Activated CD4-positive, alpha-beta T cell treated with anti-CD3 and anti-CD28 coated beads for 36 hours (primary cell): ENCODE measurements at regions of chr12 and their contacts with region 1.

Region 1: DNA sequence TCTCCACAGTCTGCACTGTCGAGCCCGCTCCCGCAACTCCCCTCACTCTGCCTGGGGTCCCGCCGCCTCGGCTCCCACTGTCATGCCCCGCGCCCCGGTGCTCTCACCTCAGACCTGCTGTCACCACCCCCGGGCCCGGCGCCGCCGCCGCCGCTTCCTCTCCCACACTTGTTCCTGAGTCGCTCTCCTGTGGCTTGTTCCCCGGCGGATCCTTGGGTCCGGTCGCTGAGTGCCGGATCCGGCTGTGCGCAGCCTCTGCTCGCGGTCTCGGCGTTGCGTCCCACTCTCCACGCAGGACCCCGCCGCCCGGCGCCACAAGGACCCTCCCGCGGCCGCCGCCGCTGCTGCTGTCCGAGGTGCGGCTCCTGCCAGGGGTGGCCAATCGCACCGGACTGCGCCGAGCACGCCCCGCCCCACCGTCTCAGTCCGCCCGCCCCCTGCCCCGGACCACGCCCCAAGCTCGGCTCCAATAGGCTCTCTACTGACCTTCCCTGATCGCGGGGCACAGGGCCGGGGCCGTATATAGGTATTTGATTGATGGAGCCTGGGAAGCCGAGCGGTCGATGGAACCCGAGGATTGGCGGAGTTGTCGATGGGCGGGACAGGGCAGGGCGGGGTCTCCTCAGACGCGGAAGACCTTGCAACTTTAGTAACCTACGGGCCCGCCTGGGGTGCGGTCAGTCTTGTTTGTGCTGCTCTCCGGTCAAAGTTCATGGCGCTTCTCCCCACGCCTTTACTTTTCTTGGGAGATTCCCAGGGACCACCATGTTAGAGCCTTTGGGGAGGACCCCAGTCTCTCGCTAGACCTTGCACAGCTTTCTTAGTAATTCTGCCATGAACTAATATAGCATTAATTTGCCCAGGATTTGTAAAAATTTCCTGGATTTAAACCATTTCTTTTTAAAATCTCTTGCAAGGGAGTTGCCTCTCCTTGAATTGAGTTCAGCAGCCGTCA is at the start of gene TAOK3:
- DNase-seq: peak; percentile 99
- ATAC-seq: peak; percentile 91
- H3K4me3 Mint-ChIP-seq: peak within 1 kb of the TSS; percentile 91
- H3K27ac Mint-ChIP-seq: peak within 1 kb of the TSS; percentile 93
- H3K4me1 Mint-ChIP-seq: peaks cover 39% of the 10 kb centered on the region
- H3K27me3 Mint-ChIP-seq: no peaks in the 10 kb centered on the region
- total RNA-seq, gene TAOK3: 49.4 to 51.1 TPM

Region 2: GRCh38 chr12:116737774-116738700 is 1634.8 kb before region 1 on chr12 and contains the starts of genes RNFT2 and SPRING1:
- CTCF ChIA-PET with region 1: no interaction called
- POLR2A ChIA-PET with region 1: no interaction called
- intact Hi-C with region 1: loop called in 1 of 2 experiments (anchors 2 kb)
- DNase-seq: peak; percentile 99
- ATAC-seq: peak; percentile 99
- H3K4me3 Mint-ChIP-seq: peak within 1 kb of the TSS; percentile 85
- H3K27ac Mint-ChIP-seq: peak within 1 kb of the TSS; percentile 61
- H3K4me1 Mint-ChIP-seq: peaks cover 22% of the 10 kb centered on the region
- H3K27me3 Mint-ChIP-seq: no peaks in the 10 kb centered on the region
- total RNA-seq, gene RNFT2: 14.7 to 15.0 TPM
- total RNA-seq, gene SPRING1: 15.3 to 17.4 TPM

Region 3: GRCh38 chr12:117874842-117875434 is 497.9 kb before region 1 on chr12:
- CTCF ChIA-PET with region 1: interaction called, 11 read pairs
- POLR2A ChIA-PET with region 1: no interaction called
- intact Hi-C with region 1: loop called in 1 of 2 experiments (anchors 2 kb)
- DNase-seq: peak; percentile 84
- ATAC-seq: peak; percentile 70
- H3K4me3 Mint-ChIP-seq: no peak overlapping the region
- H3K27ac Mint-ChIP-seq: no peak overlapping the region
- H3K4me1 Mint-ChIP-seq: peaks cover 12% of the 10 kb centered on the region
- H3K27me3 Mint-ChIP-seq: peaks cover 11% of the 10 kb centered on the region

Region 4: GRCh38 chr12:118061011-118061875 is 311.6 kb before region 1 on chr12 and contains the start of gene WSB2:
- CTCF ChIA-PET with region 1: interaction called, 4 read pairs
- POLR2A ChIA-PET with region 1: no interaction called
- intact Hi-C with region 1: loop called (anchors 2 to 10 kb)
- DNase-seq: peak; percentile 73
- ATAC-seq: peak; percentile 8
- H3K4me3 Mint-ChIP-seq: peak within 1 kb of the TSS; percentile 88
- H3K27ac Mint-ChIP-seq: peak within 1 kb of the TSS; percentile 97
- H3K4me1 Mint-ChIP-seq: peaks cover 47% of the 10 kb centered on the region
- H3K27me3 Mint-ChIP-seq: peaks cover 2% of the 10 kb centered on the region
- total RNA-seq, gene WSB2: 57.7 to 58.2 TPM

Region 5: GRCh38 chr12:118164798-118165486 is 207.9 kb before region 1 on chr12:
- CTCF ChIA-PET with region 1: interaction called, 33 read pairs
- POLR2A ChIA-PET with region 1: no interaction called
- intact Hi-C with region 1: loop called (anchors 1 to 5 kb)
- DNase-seq: peak; percentile 49
- ATAC-seq: no peak
- H3K4me3 Mint-ChIP-seq: no peak overlapping the region
- H3K27ac Mint-ChIP-seq: no peak overlapping the region
- H3K4me1 Mint-ChIP-seq: peaks cover 37% of the 10 kb centered on the region
- H3K27me3 Mint-ChIP-seq: no peaks in the 10 kb centered on the region

Region 6: GRCh38 chr12:118319627-118320026 is 53.2 kb before region 1 on chr12:
- CTCF ChIA-PET with region 1: no interaction called
- POLR2A ChIA-PET with region 1: no interaction called
- intact Hi-C with region 1: no loop called
- DNase-seq: no peak
- ATAC-seq: no peak
- H3K4me3 Mint-ChIP-seq: no peak overlapping the region
- H3K27ac Mint-ChIP-seq: no peak overlapping the region
- H3K4me1 Mint-ChIP-seq: peaks cover 11% of the 10 kb centered on the region
- H3K27me3 Mint-ChIP-seq: no peaks in the 10 kb centered on the region

Region 7: DNA sequence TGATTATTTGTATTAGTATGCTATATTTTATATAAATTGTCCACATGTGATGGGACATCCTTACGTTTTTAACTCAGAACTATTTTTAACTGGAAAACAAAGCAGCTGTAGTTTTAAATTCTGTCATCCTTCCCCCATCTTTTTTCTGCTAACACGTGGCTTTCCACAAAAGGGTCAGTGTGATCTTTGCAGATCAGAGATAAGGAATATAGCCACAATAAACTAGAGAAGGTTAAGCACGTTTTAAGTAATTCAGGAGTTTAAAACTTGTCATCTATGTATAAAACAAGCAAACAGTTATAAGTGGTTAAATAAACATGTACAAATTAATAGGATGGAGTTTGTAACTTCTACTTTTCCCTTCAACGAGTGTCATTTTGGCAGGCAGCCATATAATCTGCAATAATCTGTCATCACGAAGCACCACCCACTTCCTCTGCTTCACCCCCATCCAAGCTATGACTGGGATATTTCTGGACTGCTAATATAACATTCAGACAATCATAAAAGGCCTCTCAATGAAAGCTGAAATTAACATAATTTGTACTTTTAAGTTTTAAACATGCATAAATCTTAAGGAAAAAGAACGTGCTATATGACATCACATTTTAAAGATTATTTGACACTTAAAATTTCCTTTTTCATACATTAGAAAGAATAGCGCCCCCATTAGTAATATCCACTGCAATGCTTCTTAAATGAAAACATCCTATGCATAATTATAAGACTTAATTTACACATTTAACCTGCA is 15.4 kb before region 1 on chr12:
- CTCF ChIA-PET with region 1: interaction called, 102 read pairs
- POLR2A ChIA-PET with region 1: interaction called, 6 read pairs
- intact Hi-C with region 1: loop called (anchors 1 kb)
- DNase-seq: peak; percentile 72
- ATAC-seq: peak; percentile 74
- H3K4me3 Mint-ChIP-seq: peak overlapping the region; percentile 83
- H3K27ac Mint-ChIP-seq: peak overlapping the region; percentile 95
- H3K4me1 Mint-ChIP-seq: peaks cover 49% of the 10 kb centered on the region
- H3K27me3 Mint-ChIP-seq: no peaks in the 10 kb centered on the region

Region 8: DNA sequence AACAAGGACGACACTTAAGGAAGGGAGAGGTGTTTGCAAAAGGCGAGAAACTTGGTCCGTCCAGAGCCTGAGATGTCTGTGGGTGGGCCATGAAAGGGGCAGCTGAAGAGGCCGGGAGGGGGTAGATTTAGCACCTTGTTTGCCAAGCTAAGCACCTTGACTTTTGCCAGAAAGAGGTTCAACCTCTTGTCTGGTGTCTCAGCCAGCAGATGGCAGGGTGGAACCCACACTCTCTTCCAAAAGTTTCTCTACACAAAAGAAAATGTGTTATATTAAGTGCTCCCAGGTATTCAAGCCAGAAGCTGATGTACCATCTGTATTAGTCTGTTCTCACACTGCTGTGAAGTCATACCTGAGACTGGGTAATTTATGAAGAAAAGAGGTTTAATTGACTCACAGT is 73.4 kb after region 1 on chr12:
- CTCF ChIA-PET with region 1: no interaction called
- POLR2A ChIA-PET with region 1: no interaction called
- intact Hi-C with region 1: no loop called
- DNase-seq: no peak
- ATAC-seq: no peak
- H3K4me3 Mint-ChIP-seq: no peak overlapping the region
- H3K27ac Mint-ChIP-seq: no peak overlapping the region
- H3K4me1 Mint-ChIP-seq: no peaks in the 10 kb centered on the region
- H3K27me3 Mint-ChIP-seq: peaks cover 10% of the 10 kb centered on the region

Region 9: GRCh38 chr12:118526255-118527095 is 153.7 kb after region 1 on chr12:
- CTCF ChIA-PET with region 1: no interaction called
- POLR2A ChIA-PET with region 1: no interaction called
- intact Hi-C with region 1: no loop called
- DNase-seq: no peak
- ATAC-seq: no peak
- H3K4me3 Mint-ChIP-seq: no peak overlapping the region
- H3K27ac Mint-ChIP-seq: no peak overlapping the region
- H3K4me1 Mint-ChIP-seq: no peaks in the 10 kb centered on the region
- H3K27me3 Mint-ChIP-seq: peaks cover 7% of the 10 kb centered on the region

Region 10: DNA sequence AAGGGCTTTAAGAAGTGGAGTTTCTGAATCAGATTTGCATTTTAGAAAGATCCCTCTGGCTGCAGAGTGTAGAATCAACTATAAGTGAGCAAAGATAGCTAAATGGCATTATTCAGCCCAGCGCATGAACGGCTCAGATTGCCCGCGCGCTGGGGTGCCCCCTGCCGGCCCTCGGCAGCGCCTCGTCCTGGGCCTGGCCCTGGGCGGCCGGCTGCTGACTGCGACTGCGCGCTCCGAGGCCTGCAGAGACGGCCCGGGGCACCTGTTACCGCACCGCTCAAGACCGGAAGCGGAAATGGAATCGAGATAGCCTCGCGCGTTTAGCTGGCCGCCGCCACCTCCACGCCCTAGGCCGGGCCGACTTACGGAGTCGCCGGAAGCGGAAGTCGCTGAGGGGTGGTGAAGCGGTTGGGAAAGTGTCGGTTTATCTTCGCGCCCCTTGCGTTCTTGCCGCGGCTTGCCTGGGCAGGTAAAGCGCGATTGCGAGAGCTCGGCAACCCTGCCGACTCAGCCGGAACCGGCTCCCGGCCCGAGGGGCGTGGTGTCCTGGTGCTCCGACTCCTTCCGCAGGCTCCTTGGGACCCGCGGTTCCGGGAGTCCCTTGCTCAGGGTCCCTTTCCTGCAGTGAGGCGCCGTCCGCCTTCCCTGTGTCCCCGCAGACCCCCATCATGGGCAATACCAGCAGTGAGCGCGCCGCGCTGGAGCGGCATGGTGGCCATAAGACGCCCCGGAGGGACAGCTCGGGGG is 1294.9 kb after region 1 on chr12 and contains the start of gene PRKAB1:
- CTCF ChIA-PET with region 1: interaction called, 3 read pairs
- POLR2A ChIA-PET with region 1: no interaction called
- intact Hi-C with region 1: loop called in 1 of 2 experiments (anchors 1 kb)
- DNase-seq: peak; percentile 98
- ATAC-seq: peak; percentile 96
- H3K4me3 Mint-ChIP-seq: peak within 1 kb of the TSS; percentile 91
- H3K27ac Mint-ChIP-seq: peak within 1 kb of the TSS; percentile 91
- H3K4me1 Mint-ChIP-seq: peaks cover 48% of the 10 kb centered on the region
- H3K27me3 Mint-ChIP-seq: no peaks in the 10 kb centered on the region
- total RNA-seq, gene PRKAB1: 18.0 to 21.7 TPM